Adrenal gland (tissue), 19 donors: ENCODE measurements at regions of chr7 and their contacts with region 1.

Region 1: GRCh38 chr7:32891800-32892520 is 400 bp upstream of the KBTBD2 start:
- DNase-seq: peak; percentile 96 to 98 (median 98)
- H3K4me3 ChIP-seq: peak overlapping the region; percentile 4 to 98 (median 72)
- H3K27ac ChIP-seq: peak overlapping the region; percentile 88 to 99 (median 98)
- H3K4me1 ChIP-seq: peaks cover 36 to 41% of the 10 kb centered on the region in 2 donors
- H3K27me3 ChIP-seq: no peaks in the 10 kb centered on the region
- CTCF ChIP-seq: no peak
- POLR2A ChIP-seq: peak; percentile 45 to 76

Region 2: GRCh38 chr7:32564542-32564941 is 327.4 kb before region 1 on chr7:
- intact Hi-C with region 1: no loop called
- DNase-seq: no peak
- H3K4me3 ChIP-seq: no peak overlapping the region
- H3K27ac ChIP-seq: no peak overlapping the region
- H3K4me1 ChIP-seq: no peaks in the 10 kb centered on the region
- H3K27me3 ChIP-seq: no peaks in the 10 kb centered on the region
- CTCF ChIP-seq: no peak
- POLR2A ChIP-seq: no peak

Region 3: DNA sequence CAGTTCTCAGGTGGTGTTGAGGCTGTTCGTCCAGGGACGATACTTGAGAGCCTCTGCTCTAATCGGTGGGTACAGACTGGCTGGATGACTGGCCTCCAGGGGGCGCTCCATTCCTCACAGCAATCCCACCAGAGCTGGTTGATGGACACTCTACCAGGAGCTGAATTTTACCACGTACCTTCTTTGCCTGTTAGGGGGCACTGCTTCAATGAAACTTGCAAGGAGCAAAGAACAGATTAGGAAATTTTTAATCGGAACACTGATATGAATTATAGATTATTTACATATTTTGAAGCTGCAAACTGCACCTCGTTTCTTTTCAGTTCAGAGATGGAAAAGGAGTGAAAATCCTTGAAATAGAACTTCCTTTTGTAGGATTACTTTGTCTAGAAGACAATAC is 45.3 kb before region 1 on chr7:
- intact Hi-C with region 1: loop called in 1 of 2 experiments (anchors 10 kb)
- DNase-seq: peak; percentile 80 to 95 (median 88)
- H3K4me3 ChIP-seq: peak overlapping the region in 1 of 4 donors; percentile 30
- H3K27ac ChIP-seq: no peak overlapping the region
- H3K4me1 ChIP-seq: peaks cover 0 to 9% of the 10 kb centered on the region in 2 donors
- H3K27me3 ChIP-seq: no peaks in the 10 kb centered on the region
- CTCF ChIP-seq: peak; percentile 73 to 87 (median 82)
- POLR2A ChIP-seq: no peak